ENCODE measurements at regions of chr9 and their contacts with region 1.

Region 1: DNA sequence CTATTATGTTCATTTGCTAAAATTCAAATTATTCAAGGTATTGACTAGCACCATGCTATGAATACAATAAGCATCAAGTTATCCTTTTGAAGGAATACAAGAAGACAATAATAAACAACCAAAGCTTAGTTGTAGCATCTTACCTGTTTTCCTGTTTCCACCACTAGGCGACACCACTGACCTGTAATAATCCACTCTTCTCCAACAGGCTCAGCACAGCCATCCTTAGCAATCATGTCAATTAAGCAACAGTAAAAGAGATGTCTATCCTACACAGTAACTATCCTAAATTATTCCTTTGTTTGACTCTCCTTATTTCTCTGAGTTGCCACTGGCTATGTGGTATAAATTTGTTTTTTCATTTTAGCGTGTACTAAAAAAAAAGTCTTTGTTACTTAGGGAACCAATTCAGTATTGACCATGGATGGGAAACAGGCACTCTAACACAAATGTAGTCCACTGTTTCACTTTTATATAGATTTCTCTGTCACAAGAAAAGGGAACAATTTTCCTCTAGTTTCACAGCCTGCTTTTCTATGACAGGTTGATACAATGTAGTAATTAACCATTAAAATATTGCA is 46.2 kb downstream of the PCA3 start:
- DNase-seq: no peak
- H3K4me3 ChIP-seq: no peak overlapping the region
- H3K27me3 ChIP-seq: no peaks in the 10 kb centered on the region
- CTCF ChIP-seq: peak; percentile 83

Region 2: DNA sequence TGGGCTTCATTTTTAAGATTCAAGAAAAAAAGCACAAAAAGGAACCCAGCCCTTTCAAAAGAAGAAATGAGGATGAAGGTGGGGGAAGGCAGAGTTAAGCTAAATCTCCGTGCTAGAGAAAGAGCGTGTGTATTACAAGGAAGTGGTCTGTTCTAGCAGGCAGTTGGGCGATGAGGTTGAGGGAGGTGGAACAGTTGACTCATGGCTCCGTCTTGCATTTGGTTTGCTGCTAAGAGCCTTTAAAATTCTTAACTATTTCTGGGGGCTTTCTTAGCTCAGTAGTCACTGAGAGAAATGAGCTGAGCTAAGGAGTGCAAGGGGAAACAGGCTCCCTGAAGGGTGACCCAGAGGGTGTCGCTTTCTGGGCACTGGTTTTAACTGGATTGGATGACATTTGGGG is 234.1 kb before region 1 on chr9:
- CTCF ChIA-PET with region 1: no interaction called
- POLR2A ChIA-PET with region 1: no interaction called
- DNase-seq: peak; percentile 61
- H3K4me3 ChIP-seq: no peak overlapping the region
- H3K27me3 ChIP-seq: no peaks in the 10 kb centered on the region
- CTCF ChIP-seq: no peak

Region 3: DNA sequence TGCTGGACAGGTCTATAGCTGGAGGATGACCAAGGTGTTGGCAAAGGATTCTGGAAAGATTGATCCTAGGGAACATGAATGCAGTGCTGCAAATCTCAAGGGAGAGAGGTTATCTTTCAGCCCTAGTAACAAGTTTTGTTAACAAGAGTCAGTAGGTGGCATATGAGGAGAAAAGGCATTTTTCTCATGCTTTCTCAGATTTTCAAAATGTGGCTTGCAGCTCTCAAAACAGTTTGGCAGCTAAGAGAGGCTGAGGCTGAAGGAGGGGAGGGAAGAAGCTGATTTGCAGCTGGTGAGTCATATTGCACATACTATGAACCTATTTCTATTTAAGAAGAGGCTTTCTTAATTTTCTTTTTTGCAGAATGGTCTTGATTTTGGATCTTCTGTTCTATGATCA is 110.5 kb before region 1 on chr9:
- CTCF ChIA-PET with region 1: no interaction called
- POLR2A ChIA-PET with region 1: no interaction called
- DNase-seq: peak; percentile 19
- H3K4me3 ChIP-seq: no peak overlapping the region
- H3K27me3 ChIP-seq: no peaks in the 10 kb centered on the region
- CTCF ChIP-seq: no peak

Region 4: GRCh38 chr9:76987594-76988200 is 177.2 kb after region 1 on chr9:
- CTCF ChIA-PET with region 1: interaction called, 159 read pairs
- POLR2A ChIA-PET with region 1: no interaction called
- DNase-seq: no peak
- H3K4me3 ChIP-seq: no peak overlapping the region
- H3K27me3 ChIP-seq: no peaks in the 10 kb centered on the region; the same call in 1 of the 2 replicates
- CTCF ChIP-seq: peak; percentile 63

Region 5: GRCh38 chr9:76996700-76997099 is 186.2 kb after region 1 on chr9:
- CTCF ChIA-PET with region 1: interaction called, 159 read pairs
- POLR2A ChIA-PET with region 1: no interaction called
- DNase-seq: no peak
- H3K4me3 ChIP-seq: no peak overlapping the region
- H3K27me3 ChIP-seq: no peaks in the 10 kb centered on the region
- CTCF ChIP-seq: peak; percentile 78

Region 6: GRCh38 chr9:77149879-77150278 is 339.4 kb after region 1 on chr9:
- CTCF ChIA-PET with region 1: interaction called, 24 read pairs
- POLR2A ChIA-PET with region 1: no interaction called
- DNase-seq: no peak
- H3K4me3 ChIP-seq: no peak overlapping the region
- H3K27me3 ChIP-seq: peaks cover 4% of the 10 kb centered on the region; the same call in 1 of the 2 replicates
- CTCF ChIP-seq: no peak

Measured in BJ (cell line).